ENCODE measurements at regions of chr5 and their contacts with region 1.

Region 1: GRCh38 chr5:37554938-37555337 is 175.8 kb downstream of the WDR70 start:
- DNase-seq: peak; percentile 18 to 48 (median 23)
- ATAC-seq: no peak
- H3K4me3 ChIP-seq: no peak overlapping the region
- H3K27ac ChIP-seq: no peak overlapping the region
- H3K4me1 ChIP-seq: peaks cover 0 to 22% of the 10 kb centered on the region in 2 experiments; a peak in 4 of 5 replicates
- H3K27me3 ChIP-seq: no peaks in the 10 kb centered on the region
- CTCF ChIP-seq: peak; percentile 50 to 54 (median 51)
- EP300 ChIP-seq: no peak
- POLR2A ChIP-seq: no peak
- RAD21 ChIP-seq: peak; percentile 40 to 60

Region 2: DNA sequence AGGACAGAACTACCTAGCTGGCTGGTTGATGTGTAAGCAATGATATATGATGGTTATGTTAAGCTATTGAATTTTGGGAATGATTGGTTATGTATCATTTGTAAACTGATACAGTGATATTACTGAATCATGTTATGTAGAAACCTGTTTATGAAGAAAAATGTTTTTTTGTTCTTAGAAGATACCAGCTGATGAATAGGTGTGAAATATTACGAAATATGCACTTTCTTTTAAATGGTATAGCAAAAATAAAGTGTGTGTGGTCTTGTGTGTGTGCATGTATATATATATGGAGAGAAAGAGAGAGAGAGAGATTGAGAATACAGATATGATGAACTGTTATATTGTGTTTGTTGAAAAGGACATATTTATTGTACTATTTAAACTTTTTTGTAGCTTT is 11.7 kb before region 1 on chr5:
- CTCF ChIA-PET with region 1: no interaction called
- POLR2A ChIA-PET with region 1: interaction called, 15 read pairs
- in situ Hi-C with region 1: no loop called
- intact Hi-C with region 1: no loop called
- DNase-seq: no peak
- ATAC-seq: no peak
- H3K4me3 ChIP-seq: no peak overlapping the region
- H3K27ac ChIP-seq: no peak overlapping the region
- H3K4me1 ChIP-seq: no peaks in the 10 kb centered on the region
- H3K27me3 ChIP-seq: no peaks in the 10 kb centered on the region
- CTCF ChIP-seq: no peak
- EP300 ChIP-seq: no peak
- POLR2A ChIP-seq: no peak
- RAD21 ChIP-seq: no peak